ENCODE measurements at regions of chr4 and their contacts with region 1.

Region 1: DNA sequence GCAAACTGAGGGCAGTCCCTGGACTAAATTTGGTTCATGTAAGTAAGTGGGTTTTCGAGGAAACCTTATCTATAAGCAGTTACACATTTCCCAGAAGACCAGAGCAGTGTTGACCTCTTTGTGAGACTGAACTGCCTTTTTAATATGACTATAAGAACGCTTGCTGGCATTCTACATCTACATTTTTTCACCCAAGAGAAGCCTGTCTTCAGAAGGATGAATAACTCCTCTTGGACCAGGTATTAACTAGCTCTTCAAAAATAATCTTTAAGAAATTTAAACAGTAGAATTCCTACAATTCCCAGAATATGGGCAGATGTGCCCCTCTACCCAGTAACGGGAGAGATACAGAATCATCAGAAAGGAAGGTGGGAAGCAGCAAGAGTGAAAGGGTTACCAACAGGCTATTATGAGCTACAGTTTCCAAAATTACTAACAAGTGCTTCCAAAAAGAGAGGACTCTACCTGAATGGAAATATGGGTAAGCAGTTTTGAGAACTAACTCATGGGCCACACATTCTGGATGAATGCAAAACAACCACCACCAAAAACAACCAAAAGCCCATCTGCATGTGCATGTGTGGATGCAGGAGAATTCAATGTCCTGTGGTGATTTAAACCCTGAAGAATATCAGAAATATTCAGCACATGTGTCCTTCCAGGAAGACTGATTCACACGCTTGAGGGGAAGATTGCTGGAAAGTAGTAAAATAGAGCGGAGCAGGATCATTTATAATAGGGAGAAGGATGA is 17.4 kb downstream of the BBS12 start:
- DNase-seq: no peak
- ATAC-seq: no peak
- H3K4me3 ChIP-seq: no peak overlapping the region
- H3K27ac ChIP-seq: no peak overlapping the region
- H3K4me1 ChIP-seq: peaks cover 0 to 15% (median 0%) of the 10 kb centered on the region in 9 donors
- H3K27me3 ChIP-seq: peaks cover 0 to 14% (median 4%) of the 10 kb centered on the region in 7 donors
- CTCF ChIP-seq: no peak

Region 2: DNA sequence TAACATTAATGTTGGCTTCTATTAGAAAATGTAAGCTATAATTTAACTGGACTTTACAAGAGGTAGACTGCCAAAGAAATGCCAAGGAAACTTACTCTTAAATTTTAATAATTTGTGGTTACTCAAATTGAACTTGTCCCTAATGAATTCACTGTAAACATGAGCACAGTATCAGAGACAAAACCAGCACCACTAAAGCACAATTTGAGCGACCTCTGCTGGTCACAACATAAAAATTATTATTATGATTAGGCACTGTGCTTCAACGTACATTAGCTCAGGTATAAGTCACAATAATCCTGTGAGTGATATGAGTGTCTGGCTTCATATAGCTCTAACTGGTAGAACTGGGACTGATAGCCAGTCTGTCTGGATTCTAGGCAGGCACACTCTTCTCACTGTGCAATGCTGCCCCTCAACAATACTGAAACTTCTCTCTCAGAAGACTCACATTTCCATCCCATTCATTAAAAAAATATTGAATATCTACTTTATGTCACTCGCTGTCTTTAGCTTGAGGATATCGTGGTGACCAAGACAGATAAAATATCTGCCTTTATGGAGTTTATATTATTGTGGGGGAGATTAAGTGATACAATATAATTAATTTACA is 164.5 kb after region 1 on chr4:
- intact Hi-C with region 1: loop called in 3 of 10 experiments (anchors 5 kb)
- DNase-seq: no peak
- ATAC-seq: peak in 6 of 8 donors; percentile 55 to 73 (median 56)
- H3K4me3 ChIP-seq: no peak overlapping the region
- H3K27ac ChIP-seq: no peak overlapping the region
- H3K4me1 ChIP-seq: no peaks in the 10 kb centered on the region
- H3K27me3 ChIP-seq: no peaks in the 10 kb centered on the region
- CTCF ChIP-seq: peak in 7 of 9 donors; percentile 12 to 57 (median 52)

Measured in heart right ventricle (tissue), 16 donors.